ENCODE measurements at regions of chr5 and their contacts with region 1.

Region 1: GRCh38 chr5:150217873-150218692 is 28.2 kb downstream of the SLC6A7 start:
- DNase-seq: peak; percentile 87
- H3K4me3 ChIP-seq: no peak overlapping the region
- H3K27ac ChIP-seq: no peak overlapping the region
- H3K4me1 ChIP-seq: no peaks in the 10 kb centered on the region
- H3K27me3 ChIP-seq: no peaks in the 10 kb centered on the region
- CTCF ChIP-seq: peak; percentile 90 to 92 (median 91)
- POLR2A ChIP-seq: no peak

Region 2: DNA sequence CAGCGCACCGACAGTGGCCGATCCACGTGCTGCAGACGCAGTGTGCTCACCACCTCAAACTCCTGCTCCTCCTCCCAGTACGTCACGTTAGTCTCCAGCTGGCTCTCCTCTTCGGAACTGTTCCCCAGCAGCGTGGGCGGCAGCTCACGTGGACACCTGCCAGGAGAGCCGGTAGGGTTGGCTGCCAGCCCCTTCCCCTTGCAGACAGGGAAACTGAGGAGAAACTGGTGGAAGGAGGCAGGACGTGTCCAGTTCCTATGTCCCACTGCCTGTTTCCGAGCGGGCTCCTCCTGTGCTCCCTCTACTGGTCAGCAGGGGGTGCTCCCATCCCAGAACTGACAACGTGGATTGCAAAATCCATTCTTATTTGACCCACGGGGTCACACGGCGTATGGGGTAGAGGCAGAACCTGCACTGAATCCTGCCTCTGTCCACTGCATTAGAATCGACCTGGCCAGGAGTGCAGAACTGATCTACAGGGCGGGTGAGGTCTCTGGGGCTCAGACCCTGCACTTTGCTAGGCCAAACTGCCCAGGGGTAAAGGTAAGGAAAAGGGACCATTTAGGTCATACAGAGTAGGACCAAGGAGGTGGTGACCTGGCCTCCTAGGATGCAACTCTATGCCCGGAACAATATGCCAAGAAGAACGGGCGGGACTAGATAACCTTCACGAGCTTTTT is 88.1 kb before region 1 on chr5:
- intact Hi-C with region 1: loop called (anchors 10 kb)
- DNase-seq: peak; percentile 81
- H3K4me3 ChIP-seq: no peak overlapping the region
- H3K27ac ChIP-seq: peak overlapping the region in 1 of 2 donors; percentile 76
- H3K4me1 ChIP-seq: peaks cover 27% of the 10 kb centered on the region
- H3K27me3 ChIP-seq: no peaks in the 10 kb centered on the region
- CTCF ChIP-seq: peak; percentile 83 to 90 (median 87)
- POLR2A ChIP-seq: no peak

Region 3: DNA sequence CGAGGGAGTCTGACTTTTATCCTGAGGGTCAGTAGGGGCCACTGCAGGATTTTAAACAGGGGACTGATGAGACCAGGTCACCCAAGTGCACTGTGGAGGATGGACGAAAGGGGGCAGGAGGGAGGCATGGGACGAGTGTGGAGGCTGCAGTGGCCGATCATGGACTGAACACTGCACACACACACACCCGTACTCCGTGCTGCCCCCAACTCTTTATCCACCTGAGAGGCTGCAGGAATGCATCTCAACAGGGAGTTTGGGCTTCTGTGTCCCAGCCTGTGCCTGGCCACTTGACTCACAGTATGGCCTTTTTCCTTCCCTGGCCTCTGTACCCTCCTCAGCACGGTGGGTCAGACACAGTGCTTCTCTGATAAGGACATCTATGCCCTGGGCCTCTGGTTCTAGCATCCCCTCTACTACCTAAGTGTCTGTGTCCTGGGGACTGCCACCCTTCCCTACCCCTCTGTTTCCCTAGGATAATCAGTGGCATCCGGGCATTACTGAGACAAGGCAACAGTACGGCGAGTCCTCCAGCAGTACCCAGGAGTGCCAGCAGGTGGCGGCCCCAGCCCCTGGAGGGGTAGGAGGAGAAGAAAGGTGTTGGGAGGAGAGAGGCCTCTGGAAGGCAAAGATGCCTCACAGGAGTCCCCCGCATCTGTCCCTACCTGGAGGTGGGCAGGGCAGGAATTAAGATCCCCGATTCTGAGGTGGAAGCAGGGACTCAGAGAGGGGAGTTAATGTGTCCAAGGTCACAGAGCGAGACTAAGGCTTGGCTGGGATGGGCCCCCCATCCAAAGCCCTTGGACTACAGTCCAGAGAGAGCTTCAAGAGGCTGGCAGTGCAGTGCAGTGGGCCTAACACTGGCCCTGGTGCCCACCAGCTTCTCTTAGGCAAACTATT is 56.6 kb before region 1 on chr5:
- intact Hi-C with region 1: loop called (anchors 2 kb)
- DNase-seq: peak; percentile 82
- H3K4me3 ChIP-seq: no peak overlapping the region
- H3K27ac ChIP-seq: peak overlapping the region in 1 of 2 donors; percentile 81
- H3K4me1 ChIP-seq: peaks cover 43% of the 10 kb centered on the region
- H3K27me3 ChIP-seq: no peaks in the 10 kb centered on the region
- CTCF ChIP-seq: peak; percentile 89 to 93 (median 90)
- POLR2A ChIP-seq: no peak

Region 4: DNA sequence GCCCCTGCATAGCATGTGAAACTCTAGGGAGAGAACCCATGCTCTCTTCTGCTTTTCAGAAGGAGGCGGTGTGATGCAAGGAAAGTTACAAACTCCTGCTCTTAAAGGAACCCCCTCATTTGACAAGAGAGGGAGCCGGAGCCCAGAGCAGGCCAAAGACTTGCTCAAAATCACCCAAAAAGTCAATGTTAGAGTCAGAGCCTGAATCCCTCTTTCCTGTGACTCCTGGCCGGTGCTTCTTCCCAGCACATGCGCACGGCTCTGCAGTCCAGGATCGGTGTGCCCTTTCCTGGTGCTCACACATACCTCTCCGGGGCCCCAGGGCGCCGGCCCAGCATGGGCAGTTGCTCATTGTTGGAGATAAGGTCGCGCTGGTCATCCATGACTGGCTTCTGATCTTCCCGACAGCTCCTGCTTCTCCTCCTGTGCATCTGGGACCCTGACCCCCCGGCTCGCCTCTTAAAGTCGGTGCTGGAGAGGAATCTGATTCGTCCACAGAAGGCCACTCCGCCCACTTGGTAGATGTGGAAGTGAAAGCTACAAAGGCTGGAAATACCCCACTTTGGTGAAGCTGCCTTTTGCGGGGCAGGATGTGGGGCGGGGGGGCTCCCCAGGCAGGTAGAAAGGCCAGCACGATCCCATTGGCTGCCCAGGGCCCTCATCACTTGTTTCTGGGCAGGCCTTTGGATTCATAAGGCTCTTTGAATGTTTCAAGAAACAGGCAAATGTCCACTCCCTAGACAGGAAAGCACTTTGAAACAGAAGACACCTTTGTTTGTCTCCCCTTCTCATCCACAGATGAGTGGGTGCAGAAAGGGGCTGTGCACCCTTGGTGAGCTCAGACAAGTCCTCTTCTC is 194.5 kb after region 1 on chr5 and contains the start of gene CD74:
- intact Hi-C with region 1: no loop called
- DNase-seq: peak; percentile 91
- H3K4me3 ChIP-seq: peak within 1 kb of the TSS; percentile 52 to 61
- H3K27ac ChIP-seq: peak within 1 kb of the TSS; percentile 72 to 85
- H3K4me1 ChIP-seq: peaks cover 11% of the 10 kb centered on the region
- H3K27me3 ChIP-seq: no peaks in the 10 kb centered on the region
- CTCF ChIP-seq: no peak
- POLR2A ChIP-seq: no peak
- total RNA-seq, gene CD74: 137 to 223 TPM

Measured in testis (tissue), 5 donors.